Activated CD4-positive, alpha-beta T cell treated with anti-CD3 and anti-CD28 coated beads, Interleukin-2, amount 10 ng/mL, durations not matched to agents 24 days and 14 days (primary cell): ENCODE measurements at regions of chr15 and their contacts with region 1.

Region 1: DNA sequence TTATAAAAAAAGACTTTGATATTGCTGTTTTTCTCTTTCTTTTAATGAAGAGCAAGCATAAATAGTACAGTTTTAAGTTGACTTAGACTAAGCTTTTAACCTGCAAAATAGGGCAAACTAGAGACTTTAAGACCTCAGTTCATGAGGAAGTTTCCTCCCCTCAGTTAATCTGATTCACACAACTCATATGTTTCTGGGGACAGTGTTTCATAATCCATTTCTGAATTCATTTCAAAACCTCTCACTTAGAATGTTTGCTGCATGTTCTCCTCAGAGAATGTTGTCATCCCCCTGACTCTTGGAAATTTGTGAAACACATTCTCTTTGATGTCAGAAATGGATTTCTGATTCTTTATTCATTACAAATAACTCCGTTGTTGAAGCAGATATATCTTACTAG is 79.3 kb upstream of the SKOR1 start:
- DNase-seq: no peak
- H3K4me3 Mint-ChIP-seq: peak overlapping the region; percentile 13
- H3K27ac Mint-ChIP-seq: peak overlapping the region; percentile 19
- H3K4me1 Mint-ChIP-seq: peaks cover 37% of the 10 kb centered on the region
- H3K27me3 Mint-ChIP-seq: no peaks in the 10 kb centered on the region

Region 2: DNA sequence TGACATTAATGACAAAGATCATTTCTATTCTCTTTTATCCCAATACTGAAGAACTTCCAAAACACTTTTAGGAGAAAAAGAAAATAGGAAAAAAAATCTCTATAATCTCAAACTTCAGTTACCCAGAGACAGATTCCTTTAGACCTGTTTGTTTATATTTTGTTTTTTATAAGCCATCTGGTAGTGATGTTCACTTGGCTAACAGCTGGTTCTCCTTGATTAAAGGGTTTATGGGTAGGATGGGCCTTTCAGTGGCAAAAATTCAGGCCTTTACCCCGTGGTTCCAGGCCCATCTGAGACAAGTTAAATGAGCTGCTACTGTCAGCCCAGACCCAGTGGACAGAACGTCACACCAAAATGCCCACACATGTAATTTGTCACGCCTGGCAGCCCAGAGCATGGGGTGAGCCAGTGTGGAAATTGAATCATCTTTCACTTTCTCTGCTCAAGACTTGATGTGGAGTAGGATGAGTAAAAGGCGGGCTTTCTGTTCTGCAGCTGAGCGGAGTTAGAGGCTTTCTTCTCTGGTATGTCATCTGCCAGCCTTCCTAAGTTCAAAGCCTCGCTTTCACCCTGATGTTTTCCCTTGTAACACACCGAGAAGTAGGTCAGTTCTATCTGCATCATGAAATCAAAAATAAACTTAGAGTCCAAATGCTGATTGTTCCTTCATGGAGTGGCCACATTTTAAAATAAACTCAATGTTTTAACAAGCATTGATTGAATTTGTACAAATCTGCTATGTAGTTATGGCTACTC is 16.8 kb after region 1 on chr15:
- intact Hi-C with region 1: loop called (anchors 2 kb)
- DNase-seq: peak; percentile 84
- H3K4me3 Mint-ChIP-seq: peak overlapping the region; percentile 41
- H3K27ac Mint-ChIP-seq: peak overlapping the region; percentile 59
- H3K4me1 Mint-ChIP-seq: peaks cover 45% of the 10 kb centered on the region
- H3K27me3 Mint-ChIP-seq: no peaks in the 10 kb centered on the region

Region 3: GRCh38 chr15:68389936-68390790 is 644.1 kb after region 1 on chr15:
- intact Hi-C with region 1: no loop called
- DNase-seq: peak; percentile 77
- H3K4me3 Mint-ChIP-seq: peak overlapping the region; percentile 16
- H3K27ac Mint-ChIP-seq: peak overlapping the region; percentile 52
- H3K4me1 Mint-ChIP-seq: peaks cover 16% of the 10 kb centered on the region
- H3K27me3 Mint-ChIP-seq: peaks cover 27% of the 10 kb centered on the region